ENCODE measurements at regions of chr7 and their contacts with region 1.

Region 1: DNA sequence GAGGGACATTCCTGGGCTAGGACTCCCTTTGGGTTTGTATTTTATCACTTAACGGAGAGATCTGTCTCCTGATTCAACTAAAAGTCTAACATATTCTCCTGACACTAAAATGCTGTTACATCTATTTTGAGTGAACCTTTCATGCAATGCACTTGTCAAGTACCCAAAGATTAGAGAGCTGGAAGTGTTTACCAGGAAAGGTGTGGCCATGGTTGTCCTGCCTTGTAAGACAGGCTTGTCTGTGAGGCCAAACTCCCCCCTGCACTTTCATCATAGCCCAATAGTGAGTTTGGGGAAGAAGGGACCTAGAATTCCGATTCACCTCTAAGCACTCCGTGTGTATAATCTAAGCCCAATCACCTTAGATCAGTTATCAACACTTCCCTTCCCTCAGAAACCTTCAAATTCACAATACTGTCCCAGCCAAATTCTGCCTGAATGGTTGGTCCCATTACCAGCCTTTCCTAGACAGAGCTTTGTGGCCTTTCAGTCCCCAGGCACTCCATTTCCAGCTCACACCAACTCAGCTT is 162.6 kb upstream of the NAMPT start:
- H3K4me3 ChIP-seq: no peak overlapping the region
- H3K27ac ChIP-seq: no peak overlapping the region
- H3K4me1 ChIP-seq: no peaks in the 10 kb centered on the region
- CTCF ChIP-seq: no peak

Region 2: GRCh38 chr7:106461993-106462859 is 14.8 kb after region 1 on chr7:
- CTCF ChIA-PET with region 1: interaction called, 10 read pairs
- POLR2A ChIA-PET with region 1: no interaction called
- H3K4me3 ChIP-seq: no peak overlapping the region
- H3K27ac ChIP-seq: no peak overlapping the region
- H3K4me1 ChIP-seq: no peaks in the 10 kb centered on the region
- CTCF ChIP-seq: peak; percentile 27; the same call in 1 of the 2 replicates

Region 3: GRCh38 chr7:106504645-106505044 is 57.3 kb after region 1 on chr7:
- CTCF ChIA-PET with region 1: no interaction called
- POLR2A ChIA-PET with region 1: no interaction called
- H3K4me3 ChIP-seq: no peak overlapping the region
- H3K27ac ChIP-seq: no peak overlapping the region
- H3K4me1 ChIP-seq: no peaks in the 10 kb centered on the region
- CTCF ChIP-seq: no peak